Adrenal gland (tissue), 19 donors: ENCODE measurements at regions of chr19 and their contacts with region 1.

Region 1: DNA sequence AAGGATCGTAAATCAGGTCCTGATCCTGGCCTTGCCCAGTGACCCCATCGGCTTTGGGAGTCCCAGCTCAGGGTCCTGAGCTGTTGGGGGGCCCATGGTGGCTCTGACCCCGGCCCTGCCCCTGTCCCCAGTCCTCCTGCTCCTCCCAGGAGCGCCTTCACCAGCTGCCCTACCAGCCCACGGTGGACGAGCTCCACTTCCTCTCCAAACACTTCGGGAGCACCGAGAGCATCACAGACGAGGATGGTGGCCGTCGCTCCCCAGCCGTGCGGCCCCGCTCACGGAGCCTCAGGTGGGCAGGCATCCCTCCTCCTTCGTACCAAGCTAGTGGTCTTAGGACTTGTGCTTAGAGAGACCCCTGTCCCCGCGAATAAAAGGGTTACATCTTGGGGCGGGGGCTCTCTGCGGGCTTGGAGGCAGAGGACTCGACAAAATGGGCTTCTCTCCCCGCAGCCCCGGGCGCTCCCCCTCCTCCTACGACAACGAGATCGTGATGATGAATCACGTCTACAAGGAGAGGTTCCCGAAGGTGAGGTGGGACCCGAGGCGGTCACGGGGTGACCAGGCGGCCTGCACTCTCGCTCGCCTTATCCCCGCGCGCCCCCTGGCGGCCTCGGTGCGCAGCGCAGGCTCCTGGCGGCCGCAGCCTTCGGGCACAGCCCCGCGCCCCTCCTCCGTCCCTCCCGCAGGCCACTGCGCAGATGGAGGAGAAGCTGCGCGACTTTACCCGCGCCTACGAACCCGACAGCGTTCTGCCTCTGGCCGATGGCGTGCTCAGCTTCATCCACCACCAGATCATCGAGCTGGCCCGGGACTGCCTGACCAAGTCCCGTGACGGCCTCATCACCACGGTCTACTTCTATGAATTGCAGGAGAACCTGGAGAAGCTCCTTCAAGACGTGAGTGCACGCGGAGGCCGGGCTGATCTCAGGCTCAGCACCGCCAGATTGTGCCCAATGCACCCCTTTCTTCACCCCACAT is 9.1 kb downstream of the MAST1 start:
- DNase-seq: peak; percentile 85 to 95 (median 91)
- H3K4me3 ChIP-seq: peak overlapping the region in 1 of 4 donors; percentile 21
- H3K27ac ChIP-seq: peak overlapping the region in 1 of 5 donors; percentile 52
- H3K4me1 ChIP-seq: peaks cover 0 to 8% of the 10 kb centered on the region in 2 donors
- H3K27me3 ChIP-seq: peaks cover 25% of the 10 kb centered on the region
- CTCF ChIP-seq: peak; percentile 85 to 100 (median 96)
- POLR2A ChIP-seq: no peak

Region 2: GRCh38 chr19:12564016-12564664 is 283.3 kb before region 1 on chr19:
- intact Hi-C with region 1: loop called in 1 of 2 experiments (anchors 10 kb)
- DNase-seq: peak; percentile 83 to 97 (median 88)
- H3K4me3 ChIP-seq: no peak overlapping the region
- H3K27ac ChIP-seq: no peak overlapping the region
- H3K4me1 ChIP-seq: no peaks in the 10 kb centered on the region
- H3K27me3 ChIP-seq: no peaks in the 10 kb centered on the region
- CTCF ChIP-seq: peak; percentile 85 to 97 (median 92)
- POLR2A ChIP-seq: no peak

Region 3: DNA sequence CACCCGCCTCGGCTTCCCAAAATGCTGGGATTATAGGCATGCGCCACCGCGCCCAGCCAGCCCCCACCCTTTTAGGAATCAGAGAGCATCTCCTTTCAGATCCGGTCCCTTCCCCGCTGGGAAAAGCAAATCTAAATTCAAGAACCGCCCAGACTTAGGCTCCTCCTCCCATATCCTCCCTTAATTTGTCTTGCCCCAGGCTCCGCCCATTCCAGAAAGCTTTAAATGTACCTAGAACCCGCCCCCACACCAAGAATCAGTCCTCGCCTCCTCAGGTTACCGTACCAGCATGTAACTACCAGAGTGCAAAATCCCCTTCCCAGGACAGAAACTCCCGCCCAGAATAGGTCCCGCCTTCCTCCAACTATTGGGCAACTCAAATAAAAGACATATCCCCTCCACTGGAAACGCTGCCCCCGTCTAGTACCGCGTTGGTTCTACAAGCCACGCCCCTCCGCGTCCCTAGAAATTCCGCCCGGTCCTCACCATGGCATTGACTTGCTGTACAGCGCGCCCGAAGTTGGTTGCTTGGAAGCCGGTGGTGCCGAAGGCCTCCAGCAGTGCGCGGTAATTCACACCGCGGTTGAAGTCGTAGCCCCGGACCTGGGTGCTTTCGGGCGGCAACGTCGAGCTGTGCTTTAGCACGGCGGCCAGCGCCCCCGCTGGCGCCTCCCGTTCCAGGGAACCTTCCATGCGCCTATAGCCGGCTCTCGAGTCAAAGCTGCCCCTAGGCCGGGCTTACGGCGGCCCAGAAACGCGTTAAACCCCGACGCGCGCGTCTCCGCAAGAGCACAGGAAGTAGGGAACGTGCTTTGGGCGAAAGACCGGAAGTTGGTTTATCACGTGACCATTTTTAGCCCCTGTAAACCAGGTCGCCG is 166.1 kb before region 1 on chr19 and contains the start of gene DHPS:
- intact Hi-C with region 1: no loop called
- DNase-seq: peak; percentile 92 to 98 (median 96)
- H3K4me3 ChIP-seq: peak within 1 kb of the TSS; percentile 75 to 98 (median 90)
- H3K27ac ChIP-seq: peak within 1 kb of the TSS; percentile 92 to 100 (median 98)
- H3K4me1 ChIP-seq: no peaks in the 10 kb centered on the region
- H3K27me3 ChIP-seq: no peaks in the 10 kb centered on the region
- CTCF ChIP-seq: peak in 1 of 6 experiments; percentile 3
- POLR2A ChIP-seq: peak; percentile 40 to 49
- total RNA-seq, gene DHPS: 80.4 to 197 (median 121) TPM